ENCODE measurements at regions of chrX and their contacts with region 1.

Region 1: GRCh38 chrX:76253432-76253831 is 80.6 kb downstream of the PBDC1 start:
- DNase-seq: no peak
- H3K4me3 ChIP-seq: no peak overlapping the region
- H3K27ac ChIP-seq: no peak overlapping the region
- H3K4me1 ChIP-seq: no peaks in the 10 kb centered on the region
- H3K27me3 ChIP-seq: no peaks in the 10 kb centered on the region
- CTCF ChIP-seq: peak in 3 of 4 experiments; percentile 25 to 34 (median 26)
- EP300 ChIP-seq: no peak
- POLR2A ChIP-seq: no peak

Region 2: DNA sequence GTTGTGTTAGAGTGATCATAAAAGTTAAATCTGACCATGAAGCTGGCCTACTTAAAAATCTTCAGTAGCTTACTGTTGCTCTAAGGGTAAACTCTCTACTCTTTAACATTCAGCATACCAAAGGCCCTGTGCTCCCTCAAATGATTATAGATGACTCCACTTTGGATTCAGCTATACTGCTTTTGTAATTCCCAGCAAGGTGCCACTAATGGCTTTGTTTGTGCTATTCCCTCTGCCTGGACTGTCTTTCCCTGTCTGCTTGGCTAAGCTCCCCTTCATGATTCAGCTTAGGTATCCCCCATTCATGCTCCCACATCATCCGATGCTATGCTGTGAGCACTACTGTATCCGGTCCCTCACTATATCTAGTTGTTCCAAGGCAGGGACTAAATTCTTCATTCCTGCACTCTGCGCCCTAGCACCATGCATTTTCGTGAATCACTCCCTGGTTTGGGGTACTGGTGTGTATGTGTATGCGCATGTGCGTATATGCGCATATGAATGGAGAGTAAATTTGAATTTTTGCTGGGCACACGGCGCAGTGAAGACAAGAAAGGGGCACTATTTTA is 81.0 kb before region 1 on chrX:
- intact Hi-C with region 1: loop called (anchors 10 kb)
- DNase-seq: no peak
- H3K4me3 ChIP-seq: peak overlapping the region; percentile 52 to 68 (median 60)
- H3K27ac ChIP-seq: peak overlapping the region; percentile 86 to 88 (median 88)
- H3K4me1 ChIP-seq: peaks cover 0 to 21% (median 13%) of the 10 kb centered on the region in 4 donors
- H3K27me3 ChIP-seq: no peaks in the 10 kb centered on the region
- CTCF ChIP-seq: no peak
- EP300 ChIP-seq: no peak
- POLR2A ChIP-seq: no peak

Region 3: DNA sequence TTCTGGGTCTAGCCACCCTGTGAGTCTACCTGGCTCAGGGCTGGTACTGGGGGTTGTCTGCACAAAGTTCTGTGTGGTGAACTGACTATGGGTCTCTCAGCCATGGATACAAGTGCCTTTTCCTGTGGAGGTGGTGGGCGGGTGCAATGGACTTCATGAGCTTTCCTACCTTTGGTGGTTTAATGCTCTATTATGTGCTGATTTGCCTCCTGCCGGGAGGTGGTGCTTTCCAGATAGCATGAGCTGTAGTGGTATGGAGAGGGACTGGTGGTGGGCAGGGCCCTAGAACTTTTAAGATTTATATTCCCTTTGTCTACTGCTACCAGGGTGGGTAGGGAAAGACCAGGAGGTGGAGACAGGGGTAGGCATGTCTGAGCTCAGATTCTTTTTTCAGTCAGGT is 32.6 kb before region 1 on chrX:
- intact Hi-C with region 1: no loop called
- DNase-seq: no peak
- H3K4me3 ChIP-seq: no peak overlapping the region
- H3K27ac ChIP-seq: no peak overlapping the region
- H3K4me1 ChIP-seq: no peaks in the 10 kb centered on the region
- H3K27me3 ChIP-seq: no peaks in the 10 kb centered on the region
- CTCF ChIP-seq: no peak
- EP300 ChIP-seq: no peak
- POLR2A ChIP-seq: no peak